ENCODE measurements at regions of chr9 and their contacts with region 1.

Region 1: DNA sequence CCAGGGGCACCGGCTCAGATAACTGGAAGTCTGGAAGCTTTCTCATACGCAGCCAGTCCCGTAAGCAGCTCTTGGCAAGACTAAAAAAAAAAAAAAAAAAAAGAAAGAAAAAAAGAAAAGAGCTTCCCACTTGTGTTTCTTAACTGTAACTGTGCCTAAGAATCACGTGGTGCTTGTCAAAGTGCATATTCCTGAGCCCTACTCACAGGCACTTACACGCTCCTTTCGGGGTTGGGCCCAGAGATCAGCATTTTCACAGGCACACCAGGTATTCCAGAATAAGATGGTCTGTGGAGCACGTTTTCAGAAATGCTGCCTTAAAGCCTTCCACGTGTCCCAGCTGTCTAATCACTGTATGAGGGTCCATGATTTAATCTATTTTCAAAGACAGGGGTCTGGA is 22.6 kb upstream of the SH3GL2 start:
- DNase-seq: no peak
- H3K4me3 ChIP-seq: no peak overlapping the region
- H3K27ac ChIP-seq: no peak overlapping the region
- H3K4me1 ChIP-seq: no peaks in the 10 kb centered on the region
- H3K27me3 ChIP-seq: no peaks in the 10 kb centered on the region
- CTCF ChIP-seq: no peak

Region 2: DNA sequence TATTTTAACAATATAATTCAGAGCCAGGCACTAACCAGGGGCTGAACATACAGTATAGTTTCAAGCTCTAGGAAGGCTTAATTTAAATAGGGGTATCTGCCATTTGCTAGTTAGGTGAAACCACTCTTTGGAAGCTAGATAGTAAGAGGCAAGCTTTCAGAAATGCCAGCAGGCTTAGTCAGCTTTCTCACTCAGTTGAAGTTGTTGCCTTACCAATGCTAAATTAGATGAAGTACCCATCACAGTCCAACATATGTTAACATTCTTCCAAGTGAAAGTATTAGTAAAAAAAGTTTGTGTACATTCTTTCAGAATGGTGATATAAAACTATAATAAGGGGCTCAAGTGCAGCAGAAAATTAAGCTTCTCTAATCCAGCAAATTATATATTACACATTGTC is 206.4 kb before region 1 on chr9:
- CTCF ChIA-PET with region 1: no interaction called
- dilution Hi-C with region 1: no loop called
- in situ Hi-C with region 1: no loop called
- intact Hi-C with region 1: no loop called
- DNase-seq: no peak
- H3K4me3 ChIP-seq: no peak overlapping the region
- H3K27ac ChIP-seq: no peak overlapping the region
- H3K4me1 ChIP-seq: no peaks in the 10 kb centered on the region
- H3K27me3 ChIP-seq: no peaks in the 10 kb centered on the region
- CTCF ChIP-seq: no peak

Region 3: GRCh38 chr9:17613763-17614162 is 57.5 kb after region 1 on chr9:
- CTCF ChIA-PET with region 1: no interaction called
- dilution Hi-C with region 1: no loop called
- in situ Hi-C with region 1: loop called in 1 of 2 experiments (anchors 10 kb)
- intact Hi-C with region 1: no loop called
- DNase-seq: peak; percentile 41
- H3K4me3 ChIP-seq: no peak overlapping the region
- H3K27ac ChIP-seq: no peak overlapping the region
- H3K4me1 ChIP-seq: no peaks in the 10 kb centered on the region
- H3K27me3 ChIP-seq: peaks cover 3% of the 10 kb centered on the region
- CTCF ChIP-seq: no peak

Measured in mammary epithelial cell (primary cell).